Activated naive CD4-positive, alpha-beta T cell treated with anti-CD3 and anti-CD28 coated beads for 36 hours (primary cell): ENCODE measurements at regions of chr19 and their contacts with region 1.

Region 1: GRCh38 chr19:5048091-5048726 is 79.3 kb downstream of the KDM4B start:
- DNase-seq: peak; percentile 65
- H3K4me3 Mint-ChIP-seq: no peak overlapping the region
- H3K27ac Mint-ChIP-seq: no peak overlapping the region
- H3K4me1 Mint-ChIP-seq: peaks cover 1% of the 10 kb centered on the region
- H3K27me3 Mint-ChIP-seq: no peaks in the 10 kb centered on the region

Region 2: DNA sequence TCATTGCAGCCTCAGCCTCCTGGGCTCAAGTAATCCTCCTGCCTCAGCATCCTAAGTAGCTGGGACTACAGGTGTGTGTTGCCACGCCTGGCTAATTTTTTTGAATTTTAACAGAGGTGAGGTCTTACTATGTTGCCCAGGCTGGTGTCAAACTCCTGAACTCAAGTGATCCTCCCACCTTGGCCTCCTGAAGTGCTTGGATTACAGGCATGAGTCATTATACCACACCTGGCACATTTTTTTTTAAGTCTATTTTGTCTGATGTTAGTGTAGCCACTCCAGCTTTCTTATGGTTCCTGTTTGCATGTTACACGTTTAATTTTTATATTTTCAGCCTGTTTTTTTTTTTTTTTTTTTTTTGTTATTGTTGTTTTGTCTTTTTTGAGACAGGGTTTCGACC is 54.5 kb before region 1 on chr19:
- CTCF ChIA-PET with region 1: no interaction called
- intact Hi-C with region 1: no loop called
- DNase-seq: no peak
- H3K4me3 Mint-ChIP-seq: no peak overlapping the region
- H3K27ac Mint-ChIP-seq: no peak overlapping the region
- H3K4me1 Mint-ChIP-seq: peaks cover 3% of the 10 kb centered on the region
- H3K27me3 Mint-ChIP-seq: no peaks in the 10 kb centered on the region

Region 3: GRCh38 chr19:5480427-5480836 is 432.2 kb after region 1 on chr19:
- CTCF ChIA-PET with region 1: no interaction called
- intact Hi-C with region 1: loop called (anchors 1 kb)
- DNase-seq: peak; percentile 55
- H3K4me3 Mint-ChIP-seq: no peak overlapping the region
- H3K27ac Mint-ChIP-seq: no peak overlapping the region
- H3K4me1 Mint-ChIP-seq: no peaks in the 10 kb centered on the region
- H3K27me3 Mint-ChIP-seq: peaks cover 41% of the 10 kb centered on the region